Activated CD4-positive, alpha-beta memory T cell treated with anti-CD3 and anti-CD28 coated beads, Interleukin-2, amount 10 ng/mL, durations not matched to agents 7 days and 5 days (primary cell): ENCODE measurements at regions of chr2 and their contacts with region 1.

Region 1: DNA sequence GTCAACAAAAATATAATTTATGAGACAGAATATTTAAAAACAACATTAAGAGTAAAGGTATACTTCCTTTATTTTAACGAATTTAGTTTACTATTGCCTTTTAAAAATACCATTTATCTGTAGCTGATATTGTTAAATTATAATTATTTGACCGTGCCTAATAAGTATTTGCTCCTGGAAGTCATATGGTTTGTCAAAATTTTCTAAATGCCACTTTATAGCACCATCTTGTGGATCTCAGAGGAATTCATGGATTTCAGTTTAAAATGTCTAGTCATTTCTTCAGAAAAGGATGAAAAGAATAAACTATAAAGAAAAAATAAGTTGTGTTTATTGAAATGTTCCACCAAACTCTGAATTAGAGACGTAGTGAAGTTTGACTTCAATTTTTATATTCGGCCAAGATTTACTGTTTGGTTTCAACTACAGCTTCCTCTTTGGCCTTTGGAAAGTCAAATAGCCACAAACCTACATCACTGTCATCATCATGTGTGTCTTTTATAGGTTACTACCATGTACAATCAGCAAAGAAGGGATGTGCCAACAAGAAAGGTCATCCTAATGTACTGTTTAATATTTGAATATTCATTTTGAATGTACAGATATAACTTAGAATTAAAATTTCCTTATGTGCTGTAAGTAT is 10.3 kb upstream of the FTCDNL1 start:
- DNase-seq: no peak
- H3K4me3 Mint-ChIP-seq: no peak overlapping the region
- H3K27ac Mint-ChIP-seq: no peak overlapping the region
- H3K4me1 Mint-ChIP-seq: no peaks in the 10 kb centered on the region
- H3K27me3 Mint-ChIP-seq: peaks cover 42% of the 10 kb centered on the region

Region 2: GRCh38 chr2:199704358-199705238 is 156.7 kb before region 1 on chr2:
- CTCF ChIA-PET with region 1: interaction called, 16 read pairs
- POLR2A ChIA-PET with region 1: no interaction called
- DNase-seq: peak; percentile 18
- H3K4me3 Mint-ChIP-seq: no peak overlapping the region
- H3K27ac Mint-ChIP-seq: no peak overlapping the region
- H3K4me1 Mint-ChIP-seq: peaks cover 9% of the 10 kb centered on the region
- H3K27me3 Mint-ChIP-seq: peaks cover 8% of the 10 kb centered on the region